Activated CD8-positive, alpha-beta T cell treated with anti-CD3 and anti-CD28 coated beads for 36 hours (primary cell): ENCODE measurements at regions of chr1 and their contacts with region 1.

Region 1: GRCh38 chr1:25566730-25567341 is 23.4 kb downstream of the LDLRAP1 start:
- DNase-seq: peak; percentile 76
- ATAC-seq: peak; percentile 42
- H3K4me3 Mint-ChIP-seq: peak overlapping the region; percentile 81
- H3K27ac Mint-ChIP-seq: peak overlapping the region; percentile 89
- H3K4me1 Mint-ChIP-seq: peaks cover 88% of the 10 kb centered on the region
- H3K27me3 Mint-ChIP-seq: no peaks in the 10 kb centered on the region
- CTCF ChIP-seq: no peak

Region 2: DNA sequence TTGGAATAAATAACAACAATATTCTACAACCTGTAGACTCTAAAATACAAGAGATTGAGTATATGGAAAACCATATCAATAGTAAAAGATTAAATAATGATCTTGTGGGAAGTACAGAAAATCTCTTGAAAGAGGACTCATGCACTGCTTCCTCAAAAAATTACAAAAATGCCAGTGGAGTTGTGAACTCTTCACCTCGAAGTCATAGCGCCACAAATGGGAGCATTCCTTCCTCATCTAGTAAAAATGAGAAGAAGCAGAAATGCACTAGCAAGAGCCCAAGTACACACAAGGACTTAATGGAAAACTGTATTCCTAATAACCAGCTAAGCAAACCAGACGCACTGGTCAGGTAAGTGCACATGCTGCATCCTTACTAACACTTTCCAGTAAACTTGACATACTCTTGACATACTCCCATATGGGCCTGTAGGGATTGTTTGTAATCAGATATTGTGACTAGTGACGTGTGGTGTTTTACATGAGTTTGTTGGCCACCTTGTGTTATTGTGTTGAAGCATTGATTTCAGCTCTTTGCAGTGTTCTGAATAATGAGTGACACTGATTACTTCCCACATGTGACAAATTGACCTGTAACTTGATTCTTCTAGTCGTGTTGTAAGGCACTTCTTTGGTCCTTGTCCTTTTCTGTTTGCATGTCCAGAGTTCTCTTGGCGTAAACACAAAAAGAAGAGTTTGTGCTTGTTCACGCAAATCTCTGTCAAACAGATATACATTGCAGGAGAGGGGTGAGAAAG is 108.1 kb before region 1 on chr1:
- CTCF ChIA-PET with region 1: no interaction called
- POLR2A ChIA-PET with region 1: no interaction called
- intact Hi-C with region 1: no loop called
- DNase-seq: no peak
- ATAC-seq: no peak
- H3K4me3 Mint-ChIP-seq: no peak overlapping the region
- H3K27ac Mint-ChIP-seq: no peak overlapping the region
- H3K4me1 Mint-ChIP-seq: peaks cover 2% of the 10 kb centered on the region
- H3K27me3 Mint-ChIP-seq: no peaks in the 10 kb centered on the region
- CTCF ChIP-seq: no peak

Region 3: GRCh38 chr1:25549273-25550154 is 17.3 kb before region 1 on chr1:
- CTCF ChIA-PET with region 1: interaction called, 26 read pairs
- POLR2A ChIA-PET with region 1: interaction called, 43 read pairs
- intact Hi-C with region 1: no loop called
- DNase-seq: peak; percentile 96
- ATAC-seq: peak; percentile 94
- H3K4me3 Mint-ChIP-seq: peak overlapping the region; percentile 45
- H3K27ac Mint-ChIP-seq: peak overlapping the region; percentile 88
- H3K4me1 Mint-ChIP-seq: peaks cover 85% of the 10 kb centered on the region
- H3K27me3 Mint-ChIP-seq: no peaks in the 10 kb centered on the region
- CTCF ChIP-seq: no peak

Region 4: DNA sequence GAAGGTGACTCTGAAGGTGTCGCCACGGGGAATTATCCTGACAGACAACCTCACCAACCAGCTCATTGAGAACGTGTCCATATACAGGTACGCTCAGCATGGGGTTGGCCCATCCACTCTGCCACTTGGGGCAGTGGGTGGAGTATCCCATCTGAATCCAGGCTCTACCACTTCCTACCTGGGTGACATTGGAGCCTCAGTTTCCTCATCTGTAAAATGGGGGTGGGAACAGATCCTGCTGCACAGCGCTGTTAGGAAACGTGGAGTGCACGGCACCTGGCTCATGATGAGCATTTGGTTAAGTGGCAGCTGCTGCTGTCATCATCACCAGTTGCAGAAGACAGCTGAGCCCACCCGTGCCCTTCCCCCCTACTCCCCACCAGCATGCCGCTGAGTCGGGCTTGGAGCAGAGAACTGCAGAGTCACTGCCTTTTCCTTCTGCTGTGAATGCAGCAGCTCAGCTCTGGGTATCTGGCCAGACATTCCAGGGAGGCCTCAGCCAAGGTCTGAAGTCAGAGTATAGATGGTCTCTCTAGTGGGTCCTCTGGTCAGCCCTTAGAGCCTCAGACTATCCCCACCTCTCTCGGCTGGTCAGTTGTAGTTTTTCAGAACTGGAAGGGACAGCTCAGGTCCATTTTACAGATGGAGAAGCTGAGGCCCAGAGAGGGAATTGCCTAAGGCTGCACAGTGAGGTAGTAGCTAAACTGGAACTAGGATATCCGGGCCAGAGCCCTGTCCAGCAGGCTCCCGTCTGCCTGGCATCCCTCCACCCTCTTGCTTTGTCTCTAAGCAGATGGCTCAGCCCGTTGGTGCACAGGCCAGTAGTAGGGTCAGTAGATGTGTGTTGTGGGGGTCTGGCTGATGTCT is 11.7 kb before region 1 on chr1:
- CTCF ChIA-PET with region 1: interaction called, 26 read pairs
- POLR2A ChIA-PET with region 1: interaction called, 43 read pairs
- intact Hi-C with region 1: no loop called
- DNase-seq: no peak
- ATAC-seq: no peak
- H3K4me3 Mint-ChIP-seq: no peak overlapping the region
- H3K27ac Mint-ChIP-seq: no peak overlapping the region
- H3K4me1 Mint-ChIP-seq: peaks cover 84% of the 10 kb centered on the region
- H3K27me3 Mint-ChIP-seq: no peaks in the 10 kb centered on the region
- CTCF ChIP-seq: no peak

Region 5: GRCh38 chr1:25580927-25581326 is 14.1 kb after region 1 on chr1:
- CTCF ChIA-PET with region 1: interaction called, 23 read pairs
- POLR2A ChIA-PET with region 1: interaction called, 4 read pairs
- intact Hi-C with region 1: no loop called
- DNase-seq: no peak
- ATAC-seq: no peak
- H3K4me3 Mint-ChIP-seq: no peak overlapping the region
- H3K27ac Mint-ChIP-seq: no peak overlapping the region
- H3K4me1 Mint-ChIP-seq: no peaks in the 10 kb centered on the region
- H3K27me3 Mint-ChIP-seq: no peaks in the 10 kb centered on the region
- CTCF ChIP-seq: no peak

Region 6: DNA sequence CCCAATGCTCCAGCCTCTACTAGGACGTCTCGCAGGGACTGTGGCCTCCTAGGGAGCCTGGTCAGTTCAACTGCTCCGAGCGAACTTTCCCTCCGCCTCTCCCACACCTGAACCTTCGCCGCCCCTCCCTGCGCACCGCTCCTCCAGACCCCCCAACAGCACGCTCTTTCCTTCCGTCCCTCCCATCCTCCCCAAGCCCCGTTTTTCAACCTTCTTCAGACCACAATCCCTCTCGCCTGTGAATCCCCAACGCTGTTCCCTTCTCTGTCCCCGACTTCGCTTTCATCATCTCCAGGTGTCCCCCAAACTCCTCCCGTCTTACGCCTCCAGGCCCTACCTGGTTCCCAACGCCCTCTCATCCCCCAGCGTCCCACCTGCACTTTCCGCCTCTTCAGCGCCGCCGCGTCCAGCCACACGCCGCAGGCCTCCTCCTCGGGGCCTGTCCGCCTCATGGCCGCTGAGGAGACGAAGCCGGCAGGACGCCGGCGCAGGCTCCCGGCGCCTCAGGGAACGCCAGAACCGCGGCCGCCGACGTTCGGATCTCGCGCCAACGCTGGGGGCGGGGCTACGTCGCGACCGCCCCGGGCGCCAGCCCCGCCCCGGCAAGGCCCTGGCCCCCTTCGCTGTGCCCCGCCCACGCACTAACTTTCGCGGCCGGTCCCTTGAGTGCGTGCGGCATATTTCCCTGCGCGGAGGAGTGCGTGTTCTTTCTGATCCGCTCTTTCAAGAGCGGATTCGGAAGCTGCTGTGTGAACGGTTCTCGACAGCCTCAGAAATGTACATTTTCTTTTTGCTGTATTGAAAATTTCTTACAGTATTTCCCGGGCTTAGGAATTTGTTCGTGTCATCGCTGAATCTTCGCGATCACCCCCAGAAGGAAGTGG is 292.3 kb after region 1 on chr1 and contains the start of gene AUNIP:
- CTCF ChIA-PET with region 1: no interaction called
- POLR2A ChIA-PET with region 1: no interaction called
- intact Hi-C with region 1: no loop called
- DNase-seq: peak; percentile 95
- ATAC-seq: peak; percentile 98
- H3K4me3 Mint-ChIP-seq: peak within 1 kb of the TSS; percentile 98
- H3K27ac Mint-ChIP-seq: peak within 1 kb of the TSS; percentile 87
- H3K4me1 Mint-ChIP-seq: peaks cover 19% of the 10 kb centered on the region
- H3K27me3 Mint-ChIP-seq: no peaks in the 10 kb centered on the region
- CTCF ChIP-seq: no peak
- total RNA-seq, gene AUNIP: 8.8 to 10.3 TPM